Activated CD4-positive, alpha-beta memory T cell treated with anti-CD3 and anti-CD28 coated beads for 36 hours (primary cell): ENCODE measurements at regions of chr19 and their contacts with region 1.

Region 1: DNA sequence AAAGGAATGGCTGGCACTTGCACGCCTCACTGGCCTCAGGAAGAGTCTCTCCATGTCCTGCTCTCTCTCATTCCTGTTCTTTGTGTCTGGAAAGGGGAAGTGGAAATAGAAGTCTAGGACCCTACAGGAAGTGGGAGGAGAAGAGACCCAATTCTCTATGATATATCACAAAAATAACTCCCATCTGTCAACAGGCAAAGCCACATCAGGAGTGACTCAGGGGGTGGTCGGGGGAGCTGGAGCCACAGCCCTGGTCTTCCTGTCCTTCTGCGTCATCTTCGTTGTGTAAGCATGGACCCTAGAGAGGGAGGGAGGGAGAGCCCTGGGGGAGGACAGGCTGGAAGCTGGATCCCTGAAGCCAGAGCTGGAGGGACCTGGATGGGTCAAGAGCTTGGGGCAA is 3.0 kb downstream of the SIGLEC9 start:
- DNase-seq: no peak
- H3K4me3 Mint-ChIP-seq: no peak overlapping the region
- H3K27ac Mint-ChIP-seq: no peak overlapping the region
- H3K4me1 Mint-ChIP-seq: peaks cover 74% of the 10 kb centered on the region
- H3K27me3 Mint-ChIP-seq: no peaks in the 10 kb centered on the region

Region 2: GRCh38 chr19:51090471-51090870 is 37.3 kb before region 1 on chr19:
- CTCF ChIA-PET with region 1: no interaction called
- POLR2A ChIA-PET with region 1: no interaction called
- intact Hi-C with region 1: no loop called
- DNase-seq: no peak
- H3K4me3 Mint-ChIP-seq: no peak overlapping the region
- H3K27ac Mint-ChIP-seq: no peak overlapping the region
- H3K4me1 Mint-ChIP-seq: no peaks in the 10 kb centered on the region
- H3K27me3 Mint-ChIP-seq: no peaks in the 10 kb centered on the region

Region 3: DNA sequence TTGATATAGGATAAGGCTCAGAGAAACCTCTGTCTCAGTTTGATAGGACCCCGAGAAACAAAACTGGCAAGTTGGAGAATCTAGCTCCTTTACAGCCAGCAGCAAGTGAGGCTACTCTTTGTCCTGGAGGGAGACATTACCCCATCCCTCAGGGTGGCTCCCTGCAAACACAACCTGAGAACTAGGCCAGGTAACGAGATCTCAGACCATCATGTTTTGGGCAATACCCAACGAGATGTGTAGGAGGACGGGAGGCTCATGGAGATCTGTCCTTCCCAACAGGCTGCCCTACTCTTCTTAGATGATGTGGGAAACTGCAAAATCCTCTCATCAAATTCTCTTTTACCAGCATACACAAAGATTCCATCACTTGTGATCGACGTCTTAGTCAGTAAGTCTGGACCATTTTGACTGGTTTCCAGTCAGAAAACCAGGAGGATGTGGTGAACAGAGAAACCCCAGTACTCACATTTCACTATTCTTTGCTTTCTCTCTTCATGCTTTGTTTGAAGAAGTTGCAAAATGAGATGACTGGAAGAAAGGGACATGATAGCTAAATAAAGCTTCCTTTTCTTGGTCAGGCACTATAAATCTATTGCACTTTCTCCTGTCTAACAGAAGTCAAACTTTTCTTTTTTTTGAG is 13.5 kb before region 1 on chr19:
- CTCF ChIA-PET with region 1: interaction called, 3 read pairs
- POLR2A ChIA-PET with region 1: interaction called, 6 read pairs
- intact Hi-C with region 1: loop called (anchors 1 kb)
- DNase-seq: no peak
- H3K4me3 Mint-ChIP-seq: no peak overlapping the region
- H3K27ac Mint-ChIP-seq: peak overlapping the region; percentile 90
- H3K4me1 Mint-ChIP-seq: peaks cover 24% of the 10 kb centered on the region
- H3K27me3 Mint-ChIP-seq: peaks cover 3% of the 10 kb centered on the region

Region 4: GRCh38 chr19:51166846-51167490 is 39.2 kb after region 1 on chr19:
- CTCF ChIA-PET with region 1: no interaction called
- POLR2A ChIA-PET with region 1: no interaction called
- intact Hi-C with region 1: no loop called
- DNase-seq: peak; percentile 42
- H3K4me3 Mint-ChIP-seq: no peak overlapping the region
- H3K27ac Mint-ChIP-seq: no peak overlapping the region
- H3K4me1 Mint-ChIP-seq: peaks cover 20% of the 10 kb centered on the region
- H3K27me3 Mint-ChIP-seq: peaks cover 11% of the 10 kb centered on the region

Region 5: GRCh38 chr19:51501594-51502263 is 374.0 kb after region 1 on chr19 and contains the start of gene SIGLEC12:
- CTCF ChIA-PET with region 1: no interaction called
- POLR2A ChIA-PET with region 1: no interaction called
- intact Hi-C with region 1: no loop called
- DNase-seq: peak; percentile 53
- H3K4me3 Mint-ChIP-seq: no peak within 1 kb of the TSS
- H3K27ac Mint-ChIP-seq: peak within 1 kb of the TSS; percentile 6
- H3K4me1 Mint-ChIP-seq: peaks cover 11% of the 10 kb centered on the region
- H3K27me3 Mint-ChIP-seq: peaks cover 4% of the 10 kb centered on the region
- total RNA-seq, gene SIGLEC12: 0.22 to 0.24 TPM